ENCODE measurements at regions of chrX and their contacts with region 1.

Region 1: DNA sequence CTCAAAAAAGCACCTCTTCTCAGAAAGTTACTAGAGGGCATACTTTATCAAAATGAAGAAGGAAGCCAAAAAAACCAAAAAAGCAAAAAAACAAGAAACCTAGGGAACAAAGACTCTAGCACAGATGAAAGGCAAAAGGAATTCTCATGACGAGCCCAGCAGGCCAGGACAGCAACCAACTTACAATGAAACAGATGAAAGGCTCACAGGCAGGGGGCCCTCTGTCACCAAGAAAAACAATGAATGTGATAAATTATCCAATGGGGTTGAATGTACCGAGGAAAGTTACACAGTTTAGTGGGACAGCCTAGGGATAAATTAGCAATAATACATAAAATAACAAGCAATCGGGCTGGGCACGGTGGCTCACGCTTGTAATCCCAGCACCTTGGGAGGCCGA is 79.0 kb downstream of the GPR82 start:
- DNase-seq: no peak
- H3K4me3 ChIP-seq: no peak overlapping the region
- H3K4me3 Mint-ChIP-seq: no peak overlapping the region
- H3K27ac ChIP-seq: no peak overlapping the region
- H3K27ac Mint-ChIP-seq: no peak overlapping the region
- H3K4me1 ChIP-seq: peaks cover 26% of the 10 kb centered on the region
- H3K4me1 Mint-ChIP-seq: peaks cover 19 to 44% (median 32%) of the 10 kb centered on the region in 4 donors
- H3K27me3 ChIP-seq: no peaks in the 10 kb centered on the region
- H3K27me3 Mint-ChIP-seq: no peaks in the 10 kb centered on the region

Region 2: GRCh38 chrX:41580423-41581064 is 222.4 kb before region 1 on chrX:
- CTCF ChIA-PET with region 1: no interaction called
- POLR2A ChIA-PET with region 1: no interaction called
- intact Hi-C with region 1: no loop called
- DNase-seq: peak in 4 of 5 donors; percentile 31 to 42 (median 36)
- H3K4me3 ChIP-seq: no peak overlapping the region
- H3K4me3 Mint-ChIP-seq: peak overlapping the region; percentile 29 to 80 (median 62)
- H3K27ac ChIP-seq: no peak overlapping the region
- H3K27ac Mint-ChIP-seq: peak overlapping the region; percentile 10 to 93 (median 74)
- H3K4me1 ChIP-seq: peaks cover 9% of the 10 kb centered on the region
- H3K4me1 Mint-ChIP-seq: peaks cover 5 to 24% (median 10%) of the 10 kb centered on the region in 4 donors
- H3K27me3 ChIP-seq: no peaks in the 10 kb centered on the region
- H3K27me3 Mint-ChIP-seq: no peaks in the 10 kb centered on the region

Region 3: DNA sequence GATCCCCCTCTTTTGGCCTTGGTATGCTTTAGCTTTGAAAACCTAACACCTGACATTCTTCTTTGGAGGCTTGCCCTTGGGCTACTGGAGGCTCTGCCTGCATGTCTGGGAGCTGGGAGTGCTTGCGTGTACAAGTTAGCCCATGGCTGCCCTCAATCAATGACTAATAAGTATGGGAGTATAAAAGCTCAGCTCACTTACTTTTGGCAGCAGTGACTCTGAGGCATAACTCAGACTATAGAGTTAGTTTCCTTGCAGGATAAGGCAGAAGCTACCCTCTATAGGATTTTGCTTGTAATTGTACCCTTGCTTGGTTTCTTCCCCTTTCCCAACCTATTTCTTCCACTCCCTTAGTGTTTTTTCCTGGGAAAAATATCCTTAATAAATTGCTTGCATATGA is 727.1 kb after region 1 on chrX:
- CTCF ChIA-PET with region 1: no interaction called
- POLR2A ChIA-PET with region 1: no interaction called
- intact Hi-C with region 1: loop called (anchors 1 kb)
- DNase-seq: no peak
- H3K4me3 ChIP-seq: no peak overlapping the region
- H3K4me3 Mint-ChIP-seq: peak overlapping the region in 1 of 8 donors; percentile 26
- H3K27ac ChIP-seq: no peak overlapping the region
- H3K27ac Mint-ChIP-seq: peak overlapping the region; percentile 23 to 90 (median 71)
- H3K4me1 ChIP-seq: peaks cover 12% of the 10 kb centered on the region
- H3K4me1 Mint-ChIP-seq: peaks cover 10 to 36% (median 12%) of the 10 kb centered on the region in 4 donors
- H3K27me3 ChIP-seq: no peaks in the 10 kb centered on the region
- H3K27me3 Mint-ChIP-seq: no peaks in the 10 kb centered on the region

Measured in CD4-positive, alpha-beta memory T cell (primary cell).